Ascending aorta (tissue), 2 donors: ENCODE measurements at regions of chr3 and their contacts with region 1.

Region 1: GRCh38 chr3:52831500-52832301 is 1.2 kb upstream of the ITIH4 start:
- DNase-seq: peak; percentile 49 to 92
- H3K4me3 ChIP-seq: peak overlapping the region; percentile 1 to 27
- H3K27ac ChIP-seq: peak overlapping the region; percentile 81 to 95
- H3K4me1 ChIP-seq: peaks cover 32 to 48% of the 10 kb centered on the region in 2 donors
- H3K27me3 ChIP-seq: no peaks in the 10 kb centered on the region
- CTCF ChIP-seq: no peak

Region 2: GRCh38 chr3:52770496-52771333 is 61.0 kb before region 1 on chr3 and contains the start of gene NEK4:
- intact Hi-C with region 1: loop called (anchors 5 kb)
- DNase-seq: peak; percentile 55 to 94
- H3K4me3 ChIP-seq: peak within 1 kb of the TSS; percentile 90 to 92
- H3K27ac ChIP-seq: peak within 1 kb of the TSS; percentile 53 to 63
- H3K4me1 ChIP-seq: peaks cover 7 to 8% of the 10 kb centered on the region in 2 donors
- H3K27me3 ChIP-seq: no peaks in the 10 kb centered on the region
- CTCF ChIP-seq: peak; percentile 5 to 23 (median 8)
- total RNA-seq, gene NEK4: 11.4 TPM

Region 3: GRCh38 chr3:52845691-52846431 is 14.2 kb after region 1 on chr3:
- intact Hi-C with region 1: loop called (anchors 1 kb)
- DNase-seq: no peak
- H3K4me3 ChIP-seq: no peak overlapping the region
- H3K27ac ChIP-seq: peak overlapping the region; percentile 89 to 92
- H3K4me1 ChIP-seq: peaks cover 11 to 29% of the 10 kb centered on the region in 2 donors
- H3K27me3 ChIP-seq: no peaks in the 10 kb centered on the region
- CTCF ChIP-seq: peak in 2 of 3 experiments; percentile 43 to 47